Activated naive CD4-positive, alpha-beta T cell treated with anti-CD3 and anti-CD28 coated beads for 36 hours (primary cell): ENCODE measurements at regions of chr2 and their contacts with region 1.

Region 1: GRCh38 chr2:210002158-210003157 is at the start of gene RPE:
- DNase-seq: peak; percentile 98
- H3K4me3 Mint-ChIP-seq: peak within 1 kb of the TSS; percentile 93
- H3K27ac Mint-ChIP-seq: peak within 1 kb of the TSS; percentile 94
- H3K4me1 Mint-ChIP-seq: peaks cover 52% of the 10 kb centered on the region
- H3K27me3 Mint-ChIP-seq: no peaks in the 10 kb centered on the region
- total RNA-seq, gene RPE: 43.9 to 46.2 TPM

Region 2: GRCh38 chr2:210476194-210477128 is 474.0 kb after region 1 on chr2 and contains the start of gene LANCL1:
- CTCF ChIA-PET with region 1: no interaction called
- intact Hi-C with region 1: loop called (anchors 1 kb)
- DNase-seq: peak; percentile 91
- H3K4me3 Mint-ChIP-seq: peak within 1 kb of the TSS; percentile 98
- H3K27ac Mint-ChIP-seq: peak within 1 kb of the TSS; percentile 98
- H3K4me1 Mint-ChIP-seq: peaks cover 46% of the 10 kb centered on the region
- H3K27me3 Mint-ChIP-seq: no peaks in the 10 kb centered on the region
- total RNA-seq, gene LANCL1: 46.1 to 47.5 TPM